Activated B cell treated with CpG ODN at 0.5 μM for 24 hours (primary cell): ENCODE measurements at regions of chr15 and their contacts with region 1.

Region 1: DNA sequence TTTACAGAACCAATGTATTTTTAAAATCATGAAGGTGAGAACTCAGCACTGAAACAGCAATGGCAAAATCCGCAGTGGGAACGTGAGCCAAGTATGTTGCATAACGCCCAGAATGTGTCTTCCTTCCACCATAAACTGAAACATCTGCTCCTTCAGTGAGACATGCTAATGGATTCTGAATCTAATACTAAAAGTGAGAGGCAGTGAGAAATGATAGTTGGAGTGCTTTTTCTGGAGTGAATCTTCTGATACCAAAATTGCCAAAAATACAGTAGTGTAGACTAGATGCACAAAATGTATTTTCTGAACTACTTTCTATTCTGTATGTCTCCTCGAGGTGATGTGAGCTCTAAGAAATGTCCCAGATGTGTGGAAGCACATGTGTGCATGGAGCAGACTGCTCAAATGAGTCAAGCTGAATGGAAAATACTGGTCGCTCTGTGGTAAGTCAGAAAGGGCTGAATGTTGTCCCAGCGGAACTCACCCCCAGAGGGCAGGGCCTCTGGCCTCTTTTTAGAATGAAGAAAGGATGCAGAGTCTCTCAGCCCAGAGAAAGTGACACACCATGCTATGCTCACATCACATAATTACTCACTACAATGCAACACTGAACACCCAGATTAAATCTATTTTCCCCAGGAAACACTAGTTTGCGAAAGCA is 73.0 kb downstream of the ATP10A start:
- DNase-seq: no peak
- ATAC-seq: no peak
- H3K4me3 Mint-ChIP-seq: no peak overlapping the region
- H3K27ac Mint-ChIP-seq: no peak overlapping the region
- H3K4me1 Mint-ChIP-seq: peaks cover 20% of the 10 kb centered on the region
- H3K27me3 Mint-ChIP-seq: peaks cover 14% of the 10 kb centered on the region
- CTCF ChIP-seq: no peak

Region 2: GRCh38 chr15:25775317-25775912 is 14.7 kb before region 1 on chr15:
- CTCF ChIA-PET with region 1: no interaction called
- POLR2A ChIA-PET with region 1: interaction called, 4 read pairs
- intact Hi-C with region 1: loop called (anchors 2 kb)
- DNase-seq: no peak
- ATAC-seq: peak; percentile 94
- H3K4me3 Mint-ChIP-seq: no peak overlapping the region
- H3K27ac Mint-ChIP-seq: no peak overlapping the region
- H3K4me1 Mint-ChIP-seq: peaks cover 14% of the 10 kb centered on the region
- H3K27me3 Mint-ChIP-seq: peaks cover 7% of the 10 kb centered on the region
- CTCF ChIP-seq: no peak